ENCODE measurements at regions of chr22 and their contacts with region 1.

Region 1: DNA sequence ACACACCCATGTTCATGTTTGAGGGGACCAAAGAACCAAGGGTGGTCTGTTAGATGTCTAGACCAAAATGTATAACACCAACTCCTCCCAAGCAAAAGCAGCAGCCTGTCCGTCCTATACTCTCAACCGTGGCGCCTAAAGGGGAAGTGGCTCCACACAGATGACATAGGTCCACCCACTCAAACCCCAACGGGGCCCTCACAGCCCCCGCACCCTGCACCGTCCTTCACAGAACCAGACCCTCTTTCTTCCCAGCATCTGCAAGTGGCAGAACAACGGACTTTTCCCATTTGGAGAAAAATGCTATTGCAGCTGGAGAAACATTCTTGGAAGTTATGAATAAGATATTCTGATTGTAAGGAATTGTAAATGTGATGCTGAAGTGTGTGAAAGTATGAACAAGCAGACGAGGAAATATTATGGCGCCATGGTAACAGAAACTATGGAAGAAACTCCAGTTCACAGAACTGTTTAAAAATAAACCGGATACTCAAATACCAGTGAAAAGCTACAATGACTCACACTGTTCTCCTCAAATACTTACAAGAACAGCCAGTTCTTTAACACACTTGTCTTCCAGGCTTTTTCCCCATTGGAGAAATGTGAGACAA is 76.5 kb upstream of the ARFGAP3 start:
- DNase-seq: peak; percentile 88
- ATAC-seq: peak; percentile 74
- H3K4me3 ChIP-seq: peak overlapping the region; percentile 36 to 81 (median 58)
- H3K4me3 Mint-ChIP-seq: peak overlapping the region; percentile 78
- H3K27ac ChIP-seq: peak overlapping the region; percentile 96 to 100
- H3K27ac Mint-ChIP-seq: peak overlapping the region; percentile 91
- H3K4me1 ChIP-seq: peaks cover 97 to 100% of the 10 kb centered on the region in 2 donors
- H3K4me1 Mint-ChIP-seq: peaks cover 93% of the 10 kb centered on the region
- H3K27me3 ChIP-seq: no peaks in the 10 kb centered on the region
- H3K27me3 Mint-ChIP-seq: no peaks in the 10 kb centered on the region
- CTCF ChIP-seq: no peak

Region 2: GRCh38 chr22:42856865-42857704 is 76.5 kb before region 1 on chr22 and contains the start of gene ARFGAP3:
- CTCF ChIA-PET with region 1: no interaction called
- POLR2A ChIA-PET with region 1: interaction called, 5 read pairs
- intact Hi-C with region 1: loop called (anchors 5 kb)
- DNase-seq: peak; percentile 98
- ATAC-seq: peak; percentile 93
- H3K4me3 ChIP-seq: peak within 1 kb of the TSS; percentile 65 to 82 (median 77)
- H3K4me3 Mint-ChIP-seq: peak within 1 kb of the TSS; percentile 86
- H3K27ac ChIP-seq: peak within 1 kb of the TSS; percentile 83 to 86
- H3K27ac Mint-ChIP-seq: peak within 1 kb of the TSS; percentile 88
- H3K4me1 ChIP-seq: peaks cover 27 to 42% of the 10 kb centered on the region in 2 donors
- H3K4me1 Mint-ChIP-seq: peaks cover 30% of the 10 kb centered on the region
- H3K27me3 ChIP-seq: no peaks in the 10 kb centered on the region
- H3K27me3 Mint-ChIP-seq: no peaks in the 10 kb centered on the region
- CTCF ChIP-seq: no peak
- total RNA-seq, gene ARFGAP3: 33.2 and 35.2 TPM in 2 replicates

Region 3: GRCh38 chr22:42889304-42889703 is 44.3 kb before region 1 on chr22:
- CTCF ChIA-PET with region 1: interaction called, 3 read pairs
- POLR2A ChIA-PET with region 1: no interaction called
- intact Hi-C with region 1: loop called (anchors 5 kb)
- DNase-seq: peak; percentile 75
- ATAC-seq: peak; percentile 85
- H3K4me3 ChIP-seq: no peak overlapping the region
- H3K4me3 Mint-ChIP-seq: peak overlapping the region; percentile 76
- H3K27ac ChIP-seq: peak overlapping the region; percentile 28 to 65
- H3K27ac Mint-ChIP-seq: peak overlapping the region; percentile 87
- H3K4me1 ChIP-seq: peaks cover 32 to 63% of the 10 kb centered on the region in 2 donors
- H3K4me1 Mint-ChIP-seq: peaks cover 53% of the 10 kb centered on the region
- H3K27me3 ChIP-seq: no peaks in the 10 kb centered on the region
- H3K27me3 Mint-ChIP-seq: no peaks in the 10 kb centered on the region
- CTCF ChIP-seq: no peak

Region 4: GRCh38 chr22:42912059-42912458 is 21.5 kb before region 1 on chr22:
- CTCF ChIA-PET with region 1: interaction called, 3 read pairs
- POLR2A ChIA-PET with region 1: no interaction called
- intact Hi-C with region 1: loop called (anchors 2 kb)
- DNase-seq: peak; percentile 49
- ATAC-seq: peak; percentile 47
- H3K4me3 ChIP-seq: no peak overlapping the region
- H3K4me3 Mint-ChIP-seq: no peak overlapping the region
- H3K27ac ChIP-seq: peak overlapping the region in 1 of 2 donors; percentile 57
- H3K27ac Mint-ChIP-seq: peak overlapping the region; percentile 1
- H3K4me1 ChIP-seq: peaks cover 15 to 24% of the 10 kb centered on the region in 2 donors
- H3K4me1 Mint-ChIP-seq: peaks cover 31% of the 10 kb centered on the region
- H3K27me3 ChIP-seq: no peaks in the 10 kb centered on the region
- H3K27me3 Mint-ChIP-seq: no peaks in the 10 kb centered on the region
- CTCF ChIP-seq: no peak

Region 5: DNA sequence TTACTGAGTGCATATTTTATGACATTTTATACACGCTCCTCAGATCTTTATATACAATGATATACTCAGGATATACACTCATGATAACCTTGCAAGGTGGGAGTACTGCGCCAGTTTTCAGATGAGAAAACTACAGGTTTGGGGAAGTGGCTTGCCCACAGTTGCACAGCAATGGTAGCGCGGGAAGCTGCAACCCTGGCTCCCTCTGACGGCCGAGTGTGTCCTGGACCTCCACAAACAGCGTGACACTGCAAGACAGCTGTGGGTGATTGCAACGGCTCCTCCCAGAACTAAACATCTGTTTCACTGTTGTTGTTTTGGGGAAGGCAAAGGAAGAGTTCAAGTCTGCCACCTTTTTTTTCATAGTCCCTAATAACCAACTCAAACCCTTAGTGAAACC is 34.3 kb after region 1 on chr22:
- CTCF ChIA-PET with region 1: interaction called, 3 read pairs
- POLR2A ChIA-PET with region 1: no interaction called
- intact Hi-C with region 1: loop called (anchors 5 kb)
- DNase-seq: peak; percentile 77
- ATAC-seq: peak; percentile 63
- H3K4me3 ChIP-seq: no peak overlapping the region
- H3K4me3 Mint-ChIP-seq: no peak overlapping the region
- H3K27ac ChIP-seq: no peak overlapping the region
- H3K27ac Mint-ChIP-seq: peak overlapping the region; percentile 46
- H3K4me1 ChIP-seq: peaks cover 7 to 16% of the 10 kb centered on the region in 2 donors
- H3K4me1 Mint-ChIP-seq: peaks cover 48% of the 10 kb centered on the region
- H3K27me3 ChIP-seq: no peaks in the 10 kb centered on the region
- H3K27me3 Mint-ChIP-seq: no peaks in the 10 kb centered on the region
- CTCF ChIP-seq: peak; percentile 46

Region 6: DNA sequence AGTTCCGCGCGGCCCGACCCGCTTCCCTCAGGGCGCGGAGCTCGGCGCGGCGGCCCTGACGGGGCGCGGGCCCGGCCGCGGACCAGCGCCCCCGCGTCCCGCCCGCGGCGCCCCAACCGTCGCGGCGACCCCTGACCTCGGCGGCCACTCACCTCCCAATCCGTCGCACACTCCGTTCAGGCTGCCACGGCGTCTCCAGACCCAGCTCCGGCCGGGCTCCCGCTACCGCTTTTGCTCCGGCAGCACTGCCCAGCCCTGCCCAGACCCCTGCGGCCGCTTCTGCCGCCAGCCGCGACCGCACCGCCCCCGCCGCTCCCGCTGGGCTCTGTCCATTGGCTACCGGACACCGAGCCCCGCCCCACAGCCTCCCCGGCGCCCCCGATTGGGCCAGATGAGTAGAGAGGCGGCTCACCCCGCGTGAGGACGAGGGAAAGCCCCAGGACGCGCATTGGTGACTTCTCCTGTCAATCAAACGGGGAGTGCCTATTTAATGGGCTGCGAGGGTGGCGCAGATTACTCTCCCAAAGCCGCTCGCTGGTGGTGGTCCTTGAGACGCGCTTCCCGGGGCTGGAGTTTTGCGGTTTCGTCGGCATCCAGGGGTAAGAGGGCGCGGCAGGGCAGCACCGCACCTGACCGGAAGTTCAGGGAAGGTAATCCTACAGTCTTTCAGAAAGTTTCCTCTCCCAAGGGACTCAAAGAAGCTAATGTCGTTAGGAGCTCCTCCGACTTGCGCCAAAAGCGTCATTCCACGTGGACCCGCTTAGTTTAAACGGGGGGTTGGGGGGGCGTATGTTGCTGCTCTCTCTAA is 81.5 kb after region 1 on chr22 and contains the start of gene PACSIN2:
- CTCF ChIA-PET with region 1: interaction called, 4 read pairs
- POLR2A ChIA-PET with region 1: interaction called, 9 read pairs
- intact Hi-C with region 1: loop called (anchors 2 kb)
- DNase-seq: peak; percentile 98
- ATAC-seq: peak; percentile 98
- H3K4me3 ChIP-seq: peak within 1 kb of the TSS; percentile 73 to 96 (median 77)
- H3K4me3 Mint-ChIP-seq: peak within 1 kb of the TSS; percentile 98
- H3K27ac ChIP-seq: peak within 1 kb of the TSS; percentile 66 to 80
- H3K27ac Mint-ChIP-seq: peak within 1 kb of the TSS; percentile 98
- H3K4me1 ChIP-seq: peaks cover 13 to 19% of the 10 kb centered on the region in 2 donors
- H3K4me1 Mint-ChIP-seq: peaks cover 32% of the 10 kb centered on the region
- H3K27me3 ChIP-seq: no peaks in the 10 kb centered on the region
- H3K27me3 Mint-ChIP-seq: no peaks in the 10 kb centered on the region
- CTCF ChIP-seq: no peak
- total RNA-seq, gene PACSIN2: 59.3 and 60.3 TPM in 2 replicates